ENCODE measurements at regions of chr16 and their contacts with region 1.

Region 1: DNA sequence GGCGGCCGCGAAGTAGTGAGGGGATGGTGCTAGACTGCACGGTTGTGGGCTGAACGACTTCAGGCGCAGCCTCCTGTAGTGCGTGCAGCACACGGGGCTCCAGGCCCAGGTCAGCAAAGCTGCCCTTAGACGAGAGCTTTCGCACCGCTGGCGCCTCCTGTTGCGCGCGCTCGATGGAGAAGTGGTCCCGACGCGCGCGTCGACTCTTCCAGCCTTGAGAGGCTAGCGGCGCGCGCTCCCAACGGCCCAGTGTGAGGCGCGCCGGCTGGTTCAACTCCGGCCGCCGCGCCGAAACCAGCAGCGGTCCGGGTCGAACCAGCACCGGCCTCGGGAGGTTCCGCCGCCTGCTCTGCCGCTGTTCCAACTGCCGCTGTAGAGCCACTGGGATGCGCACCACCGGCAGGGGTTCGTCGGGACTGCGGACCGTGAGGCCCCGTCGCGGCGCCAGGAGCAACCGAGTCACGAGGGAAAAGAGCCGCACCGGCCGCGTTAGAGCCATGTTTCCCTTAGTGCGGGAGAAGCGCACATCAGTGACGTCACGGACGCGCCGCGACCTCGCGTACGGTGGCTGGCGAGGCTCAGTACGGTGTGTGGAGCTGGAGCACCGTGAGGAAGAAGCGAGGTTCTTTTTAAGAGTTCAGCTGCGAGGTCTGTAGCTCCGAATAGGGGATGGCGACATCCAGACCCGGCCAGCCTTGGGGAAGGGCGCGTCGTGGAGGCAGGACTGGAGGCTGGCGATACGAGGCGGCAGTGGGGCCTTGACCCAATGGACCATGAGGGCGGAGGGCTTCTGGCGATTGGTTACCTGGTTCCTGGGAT is at the starts of genes DDX28 and DUS2:
- DNase-seq: peak; percentile 94
- H3K4me3 ChIP-seq: peak within 1 kb of the TSS; percentile 78
- H3K27ac ChIP-seq: peak within 1 kb of the TSS; percentile 54
- H3K4me1 ChIP-seq: peaks cover 21% of the 10 kb centered on the region
- CTCF ChIP-seq: no peak
- total RNA-seq, gene DDX28: 27.9 and 31.4 TPM in 2 replicates
- total RNA-seq, gene DUS2: 19.9 and 20.7 TPM in 2 replicates

Region 2: GRCh38 chr16:67987460-67988160 is 35.3 kb before region 1 on chr16:
- CTCF ChIA-PET with region 1: no interaction called
- POLR2A ChIA-PET with region 1: no interaction called
- intact Hi-C with region 1: no loop called
- DNase-seq: no peak
- H3K4me3 ChIP-seq: no peak overlapping the region
- H3K27ac ChIP-seq: no peak overlapping the region
- H3K4me1 ChIP-seq: peaks cover 27% of the 10 kb centered on the region
- CTCF ChIP-seq: no peak

Region 3: DNA sequence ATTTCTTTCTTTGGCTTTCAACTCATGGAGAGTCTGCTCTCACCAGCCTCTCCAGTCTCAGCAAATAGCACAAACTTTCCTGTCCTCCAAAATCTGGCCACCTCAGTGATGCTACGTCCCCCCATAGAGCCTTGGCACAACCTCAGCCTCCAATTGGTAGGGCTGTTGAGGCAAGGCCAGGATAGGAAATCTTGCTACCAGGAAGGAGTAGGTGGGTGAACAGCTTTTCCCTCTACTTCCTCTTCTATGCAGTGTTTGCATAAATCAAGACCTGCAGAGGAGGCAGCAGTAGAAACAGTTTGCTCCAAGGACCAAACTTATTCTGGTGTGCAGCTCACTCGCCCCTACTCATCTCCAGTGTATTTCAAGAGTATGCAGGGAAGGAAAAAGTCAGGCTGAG is 22.9 kb before region 1 on chr16:
- CTCF ChIA-PET with region 1: interaction called, 4 read pairs
- POLR2A ChIA-PET with region 1: interaction called, 21 read pairs
- intact Hi-C with region 1: no loop called
- DNase-seq: peak; percentile 76
- H3K4me3 ChIP-seq: peak overlapping the region; percentile 14
- H3K27ac ChIP-seq: peak overlapping the region; percentile 34
- H3K4me1 ChIP-seq: peaks cover 20% of the 10 kb centered on the region
- CTCF ChIP-seq: no peak

Measured in OCI-LY7 (cell line).